ENCODE measurements at regions of chr2 and their contacts with region 1.

Region 1: DNA sequence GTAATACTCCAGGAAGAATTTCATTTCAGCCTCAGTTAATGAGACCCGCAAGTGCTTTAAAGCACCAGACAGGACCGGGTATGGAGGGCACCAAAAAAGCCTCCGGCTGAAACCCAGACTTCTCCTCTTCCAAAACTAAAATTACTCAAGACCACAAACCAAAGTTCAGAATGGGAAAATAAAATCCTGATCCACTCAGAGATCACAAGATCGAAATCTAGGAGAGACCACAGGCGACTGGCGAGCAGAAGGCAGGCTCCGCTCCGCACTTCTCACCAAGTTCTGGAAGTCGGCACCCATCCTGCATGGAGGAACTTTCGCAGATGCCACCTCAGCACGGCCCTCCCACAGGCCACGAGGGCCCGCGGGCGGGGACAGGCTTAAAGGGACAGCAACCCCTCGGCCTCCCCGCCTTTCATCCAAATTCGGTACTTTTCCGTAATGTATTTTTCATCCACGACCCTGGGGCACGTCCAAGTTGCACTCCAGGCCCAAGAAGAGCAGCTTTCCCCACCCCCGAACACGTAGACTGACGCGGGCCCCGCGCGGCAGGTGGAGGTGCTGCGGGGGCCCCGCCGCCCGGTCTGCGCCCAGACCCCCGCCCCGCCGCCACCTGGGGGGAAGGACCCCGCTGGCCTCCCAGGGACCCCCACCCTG is 43.7 kb downstream of the HDLBP start:
- DNase-seq: peak; percentile 48 to 56 (median 49)
- H3K4me3 ChIP-seq: peak overlapping the region; percentile 76 to 88 (median 77)
- H3K4me3 Mint-ChIP-seq: peak overlapping the region; percentile 97 to 98
- H3K27ac ChIP-seq: peak overlapping the region; percentile 29 to 78
- H3K27ac Mint-ChIP-seq: peak overlapping the region; percentile 88 to 96 (median 94)
- H3K4me1 ChIP-seq: peaks cover 18 to 29% of the 10 kb centered on the region in 2 donors
- H3K4me1 Mint-ChIP-seq: peaks cover 48% of the 10 kb centered on the region
- H3K27me3 ChIP-seq: no peaks in the 10 kb centered on the region
- H3K27me3 Mint-ChIP-seq: peaks cover 1 to 3% (median 2%) of the 10 kb centered on the region in 3 donors
- CTCF ChIP-seq: no peak

Region 2: GRCh38 chr2:241309684-241310117 is 37.9 kb after region 1 on chr2:
- intact Hi-C with region 1: loop called (anchors 5 kb)
- DNase-seq: peak; percentile 30 to 46 (median 44)
- H3K4me3 ChIP-seq: peak overlapping the region in 1 of 3 experiments; percentile 26
- H3K4me3 Mint-ChIP-seq: peak overlapping the region in 1 of 2 donors; percentile 26
- H3K27ac ChIP-seq: peak overlapping the region; percentile 53 to 70
- H3K27ac Mint-ChIP-seq: peak overlapping the region; percentile 12 to 89 (median 87)
- H3K4me1 ChIP-seq: peaks cover 30 to 33% of the 10 kb centered on the region in 2 donors
- H3K4me1 Mint-ChIP-seq: peaks cover 50% of the 10 kb centered on the region
- H3K27me3 ChIP-seq: no peaks in the 10 kb centered on the region
- H3K27me3 Mint-ChIP-seq: peaks cover 0 to 4% (median 0%) of the 10 kb centered on the region in 3 donors
- CTCF ChIP-seq: no peak

Region 3: GRCh38 chr2:241469746-241470145 is 198.0 kb after region 1 on chr2:
- intact Hi-C with region 1: no loop called
- DNase-seq: no peak
- H3K4me3 ChIP-seq: no peak overlapping the region
- H3K4me3 Mint-ChIP-seq: no peak overlapping the region
- H3K27ac ChIP-seq: no peak overlapping the region
- H3K27ac Mint-ChIP-seq: no peak overlapping the region
- H3K4me1 ChIP-seq: no peaks in the 10 kb centered on the region
- H3K4me1 Mint-ChIP-seq: no peaks in the 10 kb centered on the region
- H3K27me3 ChIP-seq: peaks cover 10 to 55% of the 10 kb centered on the region in 2 donors
- H3K27me3 Mint-ChIP-seq: peaks cover 55 to 79% (median 63%) of the 10 kb centered on the region in 3 donors
- CTCF ChIP-seq: no peak

Measured in CD14-positive monocyte (primary cell).